Activated naive CD8-positive, alpha-beta T cell treated with anti-CD3 and anti-CD28 coated beads, Interleukin-2, amount 10 ng/mL, durations not matched to agents 7 days and 5 days (primary cell): ENCODE measurements at regions of chr15 and their contacts with region 1.

Region 1: GRCh38 chr15:89332446-89332845 is 2.2 kb downstream of the POLG start:
- DNase-seq: no peak
- ATAC-seq: no peak
- H3K4me3 Mint-ChIP-seq: peak overlapping the region; percentile 80
- H3K27ac Mint-ChIP-seq: peak overlapping the region; percentile 45
- H3K4me1 Mint-ChIP-seq: peaks cover 55% of the 10 kb centered on the region
- H3K27me3 Mint-ChIP-seq: peaks cover 5% of the 10 kb centered on the region

Region 2: GRCh38 chr15:89320200-89320599 is 12.2 kb before region 1 on chr15:
- POLR2A ChIA-PET with region 1: interaction called, 16 read pairs
- DNase-seq: no peak
- ATAC-seq: no peak
- H3K4me3 Mint-ChIP-seq: no peak overlapping the region
- H3K27ac Mint-ChIP-seq: peak overlapping the region; percentile 25
- H3K4me1 Mint-ChIP-seq: peaks cover 10% of the 10 kb centered on the region
- H3K27me3 Mint-ChIP-seq: no peaks in the 10 kb centered on the region